Activated T-helper 1 cell treated with anti-CD3 and anti-CD28 coated beads, Interleukin-12 subunit alpha, Interleukin-12 subunit beta, Interleukin-2, Interleukin-4 antibody, amounts not matched to agents 30 ng/mL and 10 ng/mL and 1 ng/mL, durations not matched to agents 14 hours and 24 hours and 36 hours (primary cell): ENCODE measurements at regions of chr3 and their contacts with region 1.

Region 1: DNA sequence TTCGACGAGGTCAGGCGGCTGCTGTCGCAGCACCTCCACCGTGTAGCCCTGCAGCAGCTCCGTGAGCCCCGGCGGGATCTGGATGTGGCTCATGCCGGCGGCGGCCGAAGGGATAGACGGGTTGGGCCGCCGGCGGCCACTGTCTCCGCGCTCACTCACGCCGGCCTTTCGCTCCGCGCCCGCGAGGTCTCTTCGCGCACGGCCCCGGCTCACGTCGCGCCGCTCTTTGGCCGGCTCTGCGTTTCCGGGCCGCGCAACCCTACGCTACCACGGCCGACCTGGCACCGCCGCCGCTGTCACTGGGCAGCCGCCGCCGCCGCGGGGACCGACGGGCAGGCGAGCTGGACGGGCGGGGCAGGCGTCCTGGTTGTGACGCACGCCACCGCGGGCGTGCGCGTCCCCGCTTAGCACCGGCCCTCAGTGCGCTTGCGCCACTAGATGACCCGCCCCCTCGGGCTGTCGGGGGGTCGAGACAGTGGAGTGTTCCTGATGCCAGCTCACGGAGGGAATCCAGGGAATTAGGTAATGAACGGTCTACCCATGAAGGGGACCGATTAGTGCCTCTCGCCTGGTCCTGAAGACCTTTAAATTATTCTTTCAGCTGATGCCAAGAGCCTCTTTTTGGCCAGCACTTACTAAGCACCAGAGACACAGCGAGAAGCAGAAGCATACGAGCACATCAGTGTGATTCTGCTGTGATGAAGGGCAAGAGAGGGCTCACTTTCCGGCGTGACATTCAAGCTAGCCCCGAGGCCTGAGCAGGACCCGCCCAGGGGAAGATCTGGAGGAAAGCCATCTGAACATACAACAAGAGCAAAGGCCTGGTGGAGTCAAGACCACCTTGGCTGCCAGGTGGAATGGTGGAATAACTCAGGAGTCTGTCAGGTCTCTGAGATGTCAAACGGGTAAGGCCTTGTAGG is at the start of gene PRKAR2A:
- DNase-seq: peak; percentile 79
- H3K4me3 Mint-ChIP-seq: peak within 1 kb of the TSS; percentile 87
- H3K27ac Mint-ChIP-seq: peak within 1 kb of the TSS; percentile 71
- H3K4me1 Mint-ChIP-seq: peaks cover 22% of the 10 kb centered on the region
- H3K27me3 Mint-ChIP-seq: no peaks in the 10 kb centered on the region
- total RNA-seq, gene PRKAR2A: 34.7 and 38.8 TPM in 2 replicates

Region 2: DNA sequence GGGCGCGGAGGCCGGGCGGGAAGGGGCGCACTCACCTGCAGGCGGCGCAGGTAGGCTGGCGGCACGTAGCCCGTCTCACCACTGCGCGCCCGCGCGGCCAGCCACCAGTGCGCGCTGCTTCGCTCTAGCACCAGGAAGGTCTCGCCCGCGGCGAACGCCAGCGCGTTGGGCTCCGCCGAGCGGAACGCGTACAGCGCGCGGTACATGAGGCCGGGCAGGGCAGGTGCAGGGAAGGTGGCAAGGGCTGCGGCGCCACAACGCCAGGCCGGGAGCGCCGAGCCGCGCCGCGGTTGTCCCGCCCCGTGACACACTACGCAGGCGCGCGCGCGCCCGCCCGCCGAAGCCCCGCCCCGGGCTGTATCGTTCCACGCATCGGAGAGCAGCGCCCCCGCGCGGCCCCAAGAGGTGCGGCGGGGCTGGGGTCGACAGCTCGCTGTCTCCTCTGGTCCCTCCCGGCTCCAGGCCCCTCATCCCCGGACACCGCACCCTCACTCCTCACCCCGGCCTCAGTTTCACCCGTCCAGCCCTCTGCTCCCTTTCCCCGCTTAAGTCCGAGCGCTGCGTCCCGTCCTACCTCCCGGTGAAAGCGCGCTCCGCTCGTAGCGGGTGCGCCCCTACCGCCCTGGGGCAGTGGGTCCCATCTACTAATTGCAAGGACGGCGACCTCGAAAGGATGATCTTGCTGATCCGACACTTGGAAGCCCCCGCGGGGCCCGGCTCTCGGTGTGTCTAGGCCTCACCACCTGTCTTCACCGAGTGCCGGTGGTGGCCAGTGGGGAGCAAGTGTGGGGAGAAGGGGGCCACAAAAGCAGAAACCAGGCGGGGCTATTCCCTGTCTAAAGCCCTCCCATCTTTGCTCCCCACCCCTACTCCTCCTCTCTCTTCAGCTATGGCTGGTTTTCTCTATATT is 161.9 kb before region 1 on chr3 and contains the start of gene NCKIPSD:
- intact Hi-C with region 1: no loop called
- DNase-seq: peak; percentile 85
- H3K4me3 Mint-ChIP-seq: peak within 1 kb of the TSS; percentile 97
- H3K27ac Mint-ChIP-seq: peak within 1 kb of the TSS; percentile 95
- H3K4me1 Mint-ChIP-seq: peaks cover 38% of the 10 kb centered on the region
- H3K27me3 Mint-ChIP-seq: no peaks in the 10 kb centered on the region
- total RNA-seq, gene NCKIPSD: 40.8 and 45.5 TPM in 2 replicates

Region 3: DNA sequence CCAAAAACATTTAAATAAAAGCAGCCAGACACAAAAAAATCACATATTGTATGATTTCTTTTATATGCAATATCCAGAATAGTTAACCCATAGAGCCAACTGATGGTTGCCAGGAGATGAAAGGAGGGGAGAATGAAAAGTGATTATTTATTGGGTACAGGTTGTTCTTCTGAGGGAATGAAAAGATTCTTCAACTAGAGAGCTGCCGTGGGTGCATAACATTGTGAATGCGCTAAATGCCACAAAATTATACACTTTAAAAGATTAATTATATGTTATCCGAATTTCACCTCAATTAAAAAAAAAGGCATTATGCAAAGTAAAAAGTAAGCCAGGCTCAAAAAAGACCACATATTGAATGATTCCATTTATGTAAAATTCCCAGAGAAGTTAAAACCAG is 36.2 kb before region 1 on chr3:
- intact Hi-C with region 1: loop called (anchors 1 kb)
- DNase-seq: no peak
- H3K4me3 Mint-ChIP-seq: no peak overlapping the region
- H3K27ac Mint-ChIP-seq: peak overlapping the region; percentile 69
- H3K4me1 Mint-ChIP-seq: peaks cover 28% of the 10 kb centered on the region
- H3K27me3 Mint-ChIP-seq: no peaks in the 10 kb centered on the region

Region 4: GRCh38 chr3:48898383-48899234 is 50.8 kb after region 1 on chr3 and contains the start of gene SLC25A20:
- intact Hi-C with region 1: loop called (anchors 1 kb)
- DNase-seq: peak; percentile 92
- H3K4me3 Mint-ChIP-seq: peak within 1 kb of the TSS; percentile 94
- H3K27ac Mint-ChIP-seq: peak within 1 kb of the TSS; percentile 95
- H3K4me1 Mint-ChIP-seq: peaks cover 29% of the 10 kb centered on the region
- H3K27me3 Mint-ChIP-seq: no peaks in the 10 kb centered on the region
- total RNA-seq, gene SLC25A20: 15.9 and 17.4 TPM in 2 replicates

Region 5: GRCh38 chr3:49469936-49470713 is 622.4 kb after region 1 on chr3 and contains the start of gene DAG1:
- intact Hi-C with region 1: loop called (anchors 2 kb)
- DNase-seq: peak; percentile 96
- H3K4me3 Mint-ChIP-seq: peak within 1 kb of the TSS; percentile 92
- H3K27ac Mint-ChIP-seq: peak within 1 kb of the TSS; percentile 88
- H3K4me1 Mint-ChIP-seq: peaks cover 23% of the 10 kb centered on the region
- H3K27me3 Mint-ChIP-seq: no peaks in the 10 kb centered on the region
- total RNA-seq, gene DAG1: 20.5 and 23.7 TPM in 2 replicates